ENCODE measurements at regions of chr9 and their contacts with region 1.

Region 1: DNA sequence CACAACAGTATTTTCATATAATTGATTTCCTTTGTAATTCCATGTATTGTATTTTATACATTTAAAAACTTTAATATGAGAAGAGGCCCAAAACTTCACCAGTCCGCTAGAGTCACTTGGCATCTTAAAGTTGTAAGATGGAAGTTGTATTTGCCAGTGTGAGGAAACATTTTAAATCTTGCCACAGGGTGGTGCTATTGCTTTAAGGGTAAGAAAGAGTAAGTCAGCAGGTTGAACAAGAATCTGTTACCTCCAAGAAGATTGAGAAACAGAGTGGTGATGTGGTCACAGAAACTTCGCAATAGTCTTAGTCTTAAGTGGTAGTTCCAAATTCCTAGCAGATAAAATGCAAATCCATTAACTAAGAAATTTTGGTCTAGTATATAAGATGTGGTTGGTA is 39.8 kb upstream of the RANBP6 start:
- DNase-seq: peak; percentile 30
- ATAC-seq: peak; percentile 51
- H3K4me3 Mint-ChIP-seq: no peak overlapping the region
- H3K27ac Mint-ChIP-seq: no peak overlapping the region
- H3K4me1 Mint-ChIP-seq: peaks cover 8% of the 10 kb centered on the region
- H3K27me3 Mint-ChIP-seq: peaks cover 8% of the 10 kb centered on the region; the same call in 1 of the 2 replicates
- CTCF ChIP-seq: peak; percentile 32; the same call in 1 of the 2 replicates

Region 2: GRCh38 chr9:5735072-5735471 is 320.1 kb before region 1 on chr9:
- CTCF ChIA-PET with region 1: no interaction called
- POLR2A ChIA-PET with region 1: no interaction called
- DNase-seq: no peak
- ATAC-seq: no peak
- H3K4me3 Mint-ChIP-seq: no peak overlapping the region
- H3K27ac Mint-ChIP-seq: no peak overlapping the region
- H3K4me1 Mint-ChIP-seq: no peaks in the 10 kb centered on the region
- H3K27me3 Mint-ChIP-seq: no peaks in the 10 kb centered on the region
- CTCF ChIP-seq: no peak

Region 3: GRCh38 chr9:5886114-5886939 is 168.9 kb before region 1 on chr9:
- CTCF ChIA-PET with region 1: interaction called, 64 read pairs
- POLR2A ChIA-PET with region 1: no interaction called
- DNase-seq: peak; percentile 92
- ATAC-seq: peak; percentile 98
- H3K4me3 Mint-ChIP-seq: no peak overlapping the region
- H3K27ac Mint-ChIP-seq: no peak overlapping the region
- H3K4me1 Mint-ChIP-seq: peaks cover 3% of the 10 kb centered on the region
- H3K27me3 Mint-ChIP-seq: no peaks in the 10 kb centered on the region; the same call in 1 of the 2 replicates
- CTCF ChIP-seq: peak; percentile 89

Region 4: GRCh38 chr9:6024020-6024554 is 31.1 kb before region 1 on chr9:
- CTCF ChIA-PET with region 1: interaction called, 16 read pairs
- POLR2A ChIA-PET with region 1: no interaction called
- DNase-seq: no peak
- ATAC-seq: peak; percentile 81
- H3K4me3 Mint-ChIP-seq: no peak overlapping the region
- H3K27ac Mint-ChIP-seq: no peak overlapping the region
- H3K4me1 Mint-ChIP-seq: peaks cover 5% of the 10 kb centered on the region
- H3K27me3 Mint-ChIP-seq: peaks cover 2% of the 10 kb centered on the region; the same call in 1 of the 2 replicates
- CTCF ChIP-seq: peak; percentile 57

Region 5: DNA sequence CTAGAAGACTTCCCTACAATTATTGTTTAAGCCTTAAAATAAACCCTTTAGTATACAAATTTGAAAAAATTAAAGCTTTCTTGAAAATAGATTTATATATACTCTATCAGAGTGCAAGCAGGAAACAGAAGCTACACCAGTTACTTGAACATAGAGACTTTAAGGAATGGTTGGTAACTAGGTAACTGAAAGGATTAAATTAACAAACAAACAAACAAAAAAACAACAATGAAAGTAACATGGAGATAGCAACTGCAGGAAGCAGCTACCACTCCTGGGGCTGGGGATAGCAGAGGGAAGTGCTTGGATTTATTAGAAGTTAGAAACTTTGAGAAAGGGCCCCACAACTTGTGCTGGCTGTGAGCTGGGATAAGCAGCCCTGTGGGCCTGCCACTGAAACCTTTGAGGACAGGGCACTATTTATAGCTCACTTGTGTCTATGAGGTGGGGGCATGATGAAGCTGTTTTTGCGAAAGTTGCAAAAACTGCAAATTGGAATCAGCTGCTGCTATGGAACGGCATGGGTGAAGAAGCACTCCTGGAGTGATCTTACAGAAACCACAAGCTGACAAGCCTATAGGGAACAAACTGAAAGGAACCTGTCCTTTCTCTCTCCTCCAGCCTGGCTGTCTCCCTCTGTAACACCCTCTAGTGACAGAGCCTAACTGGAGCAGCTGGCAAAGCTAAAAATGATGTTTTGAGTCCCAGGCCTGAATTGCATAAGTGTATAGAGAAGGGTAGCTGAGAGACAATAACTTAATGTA is 51.5 kb after region 1 on chr9:
- CTCF ChIA-PET with region 1: interaction called, 26 read pairs
- POLR2A ChIA-PET with region 1: no interaction called
- DNase-seq: peak; percentile 21
- ATAC-seq: peak; percentile 97
- H3K4me3 Mint-ChIP-seq: no peak overlapping the region
- H3K27ac Mint-ChIP-seq: peak overlapping the region; percentile 58; the same call in 1 of the 2 replicates
- H3K4me1 Mint-ChIP-seq: peaks cover 11% of the 10 kb centered on the region
- H3K27me3 Mint-ChIP-seq: no peaks in the 10 kb centered on the region
- CTCF ChIP-seq: no peak

Region 6: DNA sequence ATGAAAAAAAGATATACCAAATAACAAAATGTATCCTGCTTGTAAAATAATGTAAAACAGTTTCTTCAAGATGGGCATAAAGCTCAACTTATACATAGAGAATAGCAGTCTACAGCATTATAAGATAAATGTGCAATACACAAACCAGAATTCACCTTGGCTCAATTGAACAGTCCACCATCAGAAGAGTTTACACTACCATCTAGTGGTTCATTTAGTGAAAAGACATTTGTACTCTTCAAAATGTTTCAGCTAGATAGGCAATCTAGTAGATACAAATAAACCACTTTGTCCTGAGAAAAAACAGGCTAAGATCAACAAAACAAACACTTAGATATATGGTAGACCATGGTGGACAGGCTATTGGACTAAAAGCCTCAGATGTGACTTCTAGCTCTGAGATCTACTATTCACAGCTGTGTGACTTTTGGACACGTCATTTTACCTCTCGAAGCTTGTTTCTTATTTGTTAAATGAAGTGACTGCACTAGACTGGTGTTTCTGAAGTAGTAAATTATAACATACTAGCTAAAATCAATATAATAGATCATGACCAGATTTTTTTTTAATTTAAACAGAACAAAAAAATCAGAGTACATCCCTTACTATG is 250.8 kb after region 1 on chr9:
- CTCF ChIA-PET with region 1: interaction called, 73 read pairs
- POLR2A ChIA-PET with region 1: no interaction called
- DNase-seq: no peak
- ATAC-seq: no peak
- H3K4me3 Mint-ChIP-seq: no peak overlapping the region
- H3K27ac Mint-ChIP-seq: no peak overlapping the region
- H3K4me1 Mint-ChIP-seq: 0 out of 2 replicates have a peak, but pooled peaks cover 4% of the 10 kb centered on the region
- H3K27me3 Mint-ChIP-seq: no peaks in the 10 kb centered on the region; the same call in 1 of the 2 replicates
- CTCF ChIP-seq: 0 out of 2 replicates have a peak, but pooled peaks have one; percentile 14

Measured in WTC11 (cell line).